MCF 10A (cell line): ENCODE measurements at regions of chr3 and their contacts with region 1.

Region 1: DNA sequence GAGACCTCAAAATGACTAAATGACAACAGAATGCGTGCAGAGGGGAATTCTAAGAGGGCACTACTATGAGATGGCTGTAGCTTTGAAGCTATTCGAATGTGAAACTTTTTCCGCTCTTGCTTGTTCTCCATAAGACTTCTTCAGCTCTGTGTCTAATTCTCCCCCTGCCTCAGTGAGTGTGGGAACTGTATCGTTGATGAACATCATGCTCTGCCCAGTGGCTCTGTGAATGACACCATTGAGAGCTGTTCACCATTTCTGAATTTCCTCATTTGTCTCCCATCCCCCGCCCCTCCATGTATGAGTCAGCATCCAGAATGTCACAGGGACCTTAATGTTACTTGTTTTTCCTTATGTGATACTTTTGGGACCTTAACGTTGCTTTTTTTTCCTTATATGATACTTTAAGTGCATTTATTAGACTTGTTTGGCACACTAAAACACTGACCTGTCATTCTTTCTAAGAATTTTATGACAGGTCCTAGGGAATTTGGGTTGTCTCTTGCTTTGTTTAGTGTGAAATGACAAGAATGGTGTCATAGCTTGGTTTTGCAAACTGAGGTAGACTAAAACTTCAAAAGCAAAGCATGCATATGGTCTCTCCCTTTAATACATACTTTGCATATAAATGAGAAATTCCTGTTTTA is 99.5 kb downstream of the FNDC3B start:
- DNase-seq: peak; percentile 68
- H3K4me3 Mint-ChIP-seq: no peak overlapping the region
- H3K27ac Mint-ChIP-seq: peak overlapping the region; percentile 66
- H3K4me1 Mint-ChIP-seq: peaks cover 52% of the 10 kb centered on the region
- H3K27me3 Mint-ChIP-seq: no peaks in the 10 kb centered on the region
- CTCF ChIP-seq: no peak

Region 2: DNA sequence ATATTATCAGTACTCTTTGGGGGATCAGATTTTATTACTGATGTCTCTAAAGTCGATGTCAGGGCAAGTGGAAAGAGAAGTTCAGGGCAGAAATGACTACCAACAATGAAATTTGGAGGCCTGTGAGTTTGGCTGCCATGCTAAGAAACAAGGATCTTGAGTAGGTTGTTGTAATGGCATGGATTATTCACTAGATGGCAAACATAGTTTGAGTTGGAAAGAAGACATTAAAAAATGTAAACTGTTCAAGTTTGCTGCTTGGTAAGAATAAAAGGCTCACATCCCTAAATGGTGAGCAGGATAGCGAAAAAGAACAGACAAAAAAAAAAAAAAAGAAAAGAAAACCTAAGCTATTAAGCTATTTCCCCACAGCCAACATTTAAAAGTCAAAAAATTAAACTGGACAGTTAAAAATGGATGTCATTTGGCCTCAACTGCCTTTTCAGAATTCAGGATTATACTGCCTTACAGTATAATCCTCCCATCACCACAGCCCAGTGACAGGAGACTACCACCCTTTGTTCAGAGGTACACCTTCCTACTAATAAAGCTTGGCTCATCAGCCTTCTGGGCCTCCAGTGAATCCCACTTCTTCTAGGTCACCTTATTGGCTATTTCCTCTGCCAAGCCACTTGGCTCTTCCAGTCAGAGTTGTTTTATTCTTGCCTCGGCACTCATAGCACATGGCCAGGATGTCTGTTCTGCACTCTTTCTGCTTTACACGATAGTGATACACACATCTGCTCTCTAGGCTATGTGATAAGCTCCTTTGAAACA is 492.4 kb before region 1 on chr3:
- CTCF ChIA-PET with region 1: no interaction called
- POLR2A ChIA-PET with region 1: no interaction called
- intact Hi-C with region 1: no loop called
- DNase-seq: peak; percentile 55
- H3K4me3 Mint-ChIP-seq: no peak overlapping the region
- H3K27ac Mint-ChIP-seq: no peak overlapping the region
- H3K4me1 Mint-ChIP-seq: no peaks in the 10 kb centered on the region
- H3K27me3 Mint-ChIP-seq: no peaks in the 10 kb centered on the region
- CTCF ChIP-seq: peak; percentile 73

Region 3: DNA sequence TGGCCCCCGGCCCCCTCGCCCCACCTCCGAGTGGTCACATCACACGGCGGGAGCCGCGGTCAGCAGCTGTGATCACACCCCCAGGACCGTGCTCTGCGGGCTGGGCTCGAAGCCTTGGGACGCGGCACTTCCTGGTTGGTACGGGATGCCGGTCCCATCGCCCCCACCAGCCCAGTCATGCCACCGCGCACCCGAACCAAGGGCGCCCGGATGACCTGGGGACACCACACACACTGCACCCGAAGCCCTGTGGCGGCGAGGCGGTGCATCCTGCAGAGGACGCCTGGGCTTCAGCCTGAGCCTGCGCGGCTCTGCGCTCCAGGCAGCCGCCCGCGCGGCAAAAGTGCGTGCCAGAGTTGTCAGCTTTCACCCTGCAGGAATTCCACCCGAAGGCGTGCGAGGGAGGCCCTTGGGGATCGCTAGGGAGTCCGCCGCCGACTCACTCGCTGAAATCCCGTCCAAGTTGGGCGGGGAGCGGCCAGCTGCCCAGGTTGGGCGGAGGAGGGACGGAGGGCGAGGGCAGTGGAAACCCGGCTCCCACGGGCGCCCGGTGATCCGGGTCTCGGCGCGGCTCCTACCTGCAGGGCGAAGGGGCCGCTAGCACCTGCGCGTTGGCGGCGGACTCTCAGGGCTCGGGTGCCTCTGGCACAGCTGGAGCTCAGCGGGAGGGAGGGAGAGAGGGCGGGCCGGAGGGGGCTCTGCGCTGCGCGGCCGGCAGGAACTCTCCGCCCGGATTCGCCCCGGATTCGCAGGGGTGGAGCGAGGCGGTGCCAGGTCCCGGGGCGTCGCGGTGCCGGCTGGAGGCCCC is 328.9 kb before region 1 on chr3 and contains the start of gene PLD1:
- CTCF ChIA-PET with region 1: no interaction called
- POLR2A ChIA-PET with region 1: interaction called, 11 read pairs
- intact Hi-C with region 1: no loop called
- DNase-seq: peak; percentile 90
- H3K4me3 Mint-ChIP-seq: peak within 1 kb of the TSS; percentile 87
- H3K27ac Mint-ChIP-seq: peak within 1 kb of the TSS; percentile 98
- H3K4me1 Mint-ChIP-seq: peaks cover 38% of the 10 kb centered on the region
- H3K27me3 Mint-ChIP-seq: no peaks in the 10 kb centered on the region
- CTCF ChIP-seq: no peak
- total RNA-seq, gene PLD1: 8.0 and 14.8 TPM in 2 replicates

Region 4: GRCh38 chr3:172087602-172088580 is 51.0 kb before region 1 on chr3:
- CTCF ChIA-PET with region 1: interaction called, 4 read pairs
- POLR2A ChIA-PET with region 1: interaction called, 46 read pairs
- intact Hi-C with region 1: no loop called
- DNase-seq: no peak
- H3K4me3 Mint-ChIP-seq: peak overlapping the region; percentile 48
- H3K27ac Mint-ChIP-seq: peak overlapping the region; percentile 75
- H3K4me1 Mint-ChIP-seq: peaks cover 35% of the 10 kb centered on the region
- H3K27me3 Mint-ChIP-seq: no peaks in the 10 kb centered on the region
- CTCF ChIP-seq: no peak

Region 5: GRCh38 chr3:172096881-172097420 is 42.0 kb before region 1 on chr3:
- CTCF ChIA-PET with region 1: interaction called, 7 read pairs
- POLR2A ChIA-PET with region 1: interaction called, 12 read pairs
- intact Hi-C with region 1: no loop called
- DNase-seq: peak; percentile 90
- H3K4me3 Mint-ChIP-seq: peak overlapping the region; percentile 30
- H3K27ac Mint-ChIP-seq: peak overlapping the region; percentile 82
- H3K4me1 Mint-ChIP-seq: peaks cover 32% of the 10 kb centered on the region
- H3K27me3 Mint-ChIP-seq: no peaks in the 10 kb centered on the region
- CTCF ChIP-seq: no peak

Region 6: GRCh38 chr3:172153335-172153861 is 14.5 kb after region 1 on chr3:
- CTCF ChIA-PET with region 1: interaction called, 10 read pairs
- POLR2A ChIA-PET with region 1: interaction called, 139 read pairs
- intact Hi-C with region 1: loop called (anchors 1 kb)
- DNase-seq: peak; percentile 94
- H3K4me3 Mint-ChIP-seq: peak overlapping the region; percentile 53
- H3K27ac Mint-ChIP-seq: peak overlapping the region; percentile 88
- H3K4me1 Mint-ChIP-seq: peaks cover 53% of the 10 kb centered on the region
- H3K27me3 Mint-ChIP-seq: no peaks in the 10 kb centered on the region
- CTCF ChIP-seq: no peak

Region 7: DNA sequence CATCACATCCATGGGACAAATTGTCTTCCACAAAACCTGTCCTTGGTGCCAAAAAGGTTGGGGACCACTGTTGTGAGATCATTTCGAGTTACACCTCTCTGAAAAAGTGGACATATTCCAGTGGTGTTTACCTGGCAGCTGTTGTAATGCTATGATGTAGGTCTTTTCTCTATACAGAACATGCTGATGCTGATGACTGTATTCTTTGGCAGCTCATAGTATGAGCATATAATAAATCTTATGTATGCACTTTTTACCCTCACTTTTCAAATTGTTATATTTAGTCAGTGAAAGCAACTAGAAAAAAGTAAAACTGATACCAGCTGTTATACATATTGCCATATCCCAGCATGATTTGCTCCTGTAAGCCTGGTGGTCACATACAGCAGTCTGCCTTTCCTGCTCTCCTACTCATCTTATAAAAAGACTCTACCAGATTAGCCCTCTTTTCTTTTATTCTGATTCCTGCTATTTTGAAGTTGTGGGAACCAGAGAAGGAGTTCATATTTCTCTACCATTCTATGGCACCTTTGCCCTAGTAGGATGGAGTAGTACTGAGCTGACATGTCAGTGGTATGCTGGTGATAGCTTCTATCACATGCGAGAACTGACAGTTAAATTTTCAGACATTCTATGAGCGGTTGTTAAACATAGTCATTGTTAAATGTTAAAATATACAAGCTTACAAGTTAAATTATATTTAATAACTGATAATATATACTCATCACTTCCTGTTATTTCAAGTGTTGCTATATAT is 29.2 kb after region 1 on chr3:
- CTCF ChIA-PET with region 1: interaction called, 5 read pairs
- POLR2A ChIA-PET with region 1: interaction called, 48 read pairs
- intact Hi-C with region 1: loop called (anchors 2 kb)
- DNase-seq: no peak
- H3K4me3 Mint-ChIP-seq: no peak overlapping the region
- H3K27ac Mint-ChIP-seq: peak overlapping the region; percentile 96
- H3K4me1 Mint-ChIP-seq: peaks cover 16% of the 10 kb centered on the region
- H3K27me3 Mint-ChIP-seq: no peaks in the 10 kb centered on the region
- CTCF ChIP-seq: no peak

Region 8: DNA sequence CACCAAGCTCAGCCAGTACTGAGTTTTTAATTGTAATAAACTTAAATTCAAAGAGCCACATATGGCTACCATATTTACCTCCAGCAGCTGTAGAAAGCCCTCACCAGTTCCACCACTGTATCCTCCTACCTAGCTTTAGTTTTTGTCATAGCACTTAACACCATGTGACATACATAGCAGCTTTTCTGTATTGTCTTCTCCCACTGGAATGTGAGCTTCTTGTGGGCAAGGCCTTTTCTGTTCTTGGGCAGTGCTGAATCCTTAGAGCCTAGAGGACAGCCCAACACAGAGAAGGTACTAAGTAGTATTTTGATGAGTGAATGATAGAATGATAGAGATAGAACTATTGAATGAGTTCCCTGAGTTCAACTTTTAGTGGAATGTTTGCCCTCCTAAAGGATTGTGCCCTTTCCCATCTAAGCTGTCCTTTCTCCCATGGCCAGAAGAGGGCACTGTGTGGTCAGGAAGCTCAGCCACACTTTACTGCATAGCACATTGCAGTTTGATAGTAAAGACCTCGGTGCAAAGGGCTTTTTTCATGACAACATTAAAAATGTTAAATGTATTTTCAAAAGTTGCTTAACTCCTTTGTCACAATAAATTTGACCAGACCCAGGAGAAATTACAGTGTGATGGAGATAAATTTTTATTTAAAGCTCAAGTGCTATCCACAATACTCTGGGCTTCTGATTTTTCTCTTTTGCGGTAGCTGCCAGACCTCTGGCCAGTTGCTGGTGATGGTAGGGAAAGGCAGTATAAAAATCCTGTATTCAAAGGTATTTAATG is 193.5 kb after region 1 on chr3:
- CTCF ChIA-PET with region 1: interaction called, 7 read pairs
- POLR2A ChIA-PET with region 1: no interaction called
- intact Hi-C with region 1: loop called (anchors 10 kb)
- DNase-seq: peak; percentile 77
- H3K4me3 Mint-ChIP-seq: no peak overlapping the region
- H3K27ac Mint-ChIP-seq: no peak overlapping the region
- H3K4me1 Mint-ChIP-seq: no peaks in the 10 kb centered on the region
- H3K27me3 Mint-ChIP-seq: no peaks in the 10 kb centered on the region
- CTCF ChIP-seq: peak; percentile 83

Region 9: DNA sequence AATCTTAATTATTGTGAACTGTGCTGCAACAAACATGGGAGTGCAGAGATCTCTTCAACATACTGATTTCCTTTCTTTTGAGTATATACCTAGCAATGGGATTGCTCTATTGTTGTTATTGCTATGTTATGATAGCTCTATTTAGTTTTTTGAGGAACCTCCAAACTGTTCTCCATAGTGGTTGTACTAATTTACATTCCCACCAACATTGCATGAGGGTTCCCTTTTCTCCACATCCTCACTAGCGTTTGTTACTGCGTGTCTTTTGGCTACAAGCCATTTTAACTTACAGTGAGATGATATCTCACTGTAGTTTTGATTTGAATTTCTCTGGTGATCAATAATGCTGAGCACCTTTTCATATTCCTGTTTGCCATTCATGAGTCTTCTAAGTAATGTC is 429.8 kb after region 1 on chr3:
- CTCF ChIA-PET with region 1: no interaction called
- POLR2A ChIA-PET with region 1: no interaction called
- intact Hi-C with region 1: no loop called
- DNase-seq: no peak
- H3K4me3 Mint-ChIP-seq: no peak overlapping the region
- H3K27ac Mint-ChIP-seq: no peak overlapping the region
- H3K4me1 Mint-ChIP-seq: peaks cover 14% of the 10 kb centered on the region
- H3K27me3 Mint-ChIP-seq: no peaks in the 10 kb centered on the region
- CTCF ChIP-seq: no peak

Region 10: GRCh38 chr3:172710664-172711453 is 571.9 kb after region 1 on chr3 and contains the start of gene NCEH1:
- CTCF ChIA-PET with region 1: no interaction called
- POLR2A ChIA-PET with region 1: no interaction called
- intact Hi-C with region 1: no loop called
- DNase-seq: peak; percentile 97
- H3K4me3 Mint-ChIP-seq: peak within 1 kb of the TSS; percentile 94
- H3K27ac Mint-ChIP-seq: peak within 1 kb of the TSS; percentile 84
- H3K4me1 Mint-ChIP-seq: peaks cover 8% of the 10 kb centered on the region
- H3K27me3 Mint-ChIP-seq: no peaks in the 10 kb centered on the region
- CTCF ChIP-seq: peak; percentile 74
- total RNA-seq, gene NCEH1: 27.8 and 28.8 TPM in 2 replicates